A549 (cell line): ENCODE measurements at regions of chr20 and their contacts with region 1.

Region 1: DNA sequence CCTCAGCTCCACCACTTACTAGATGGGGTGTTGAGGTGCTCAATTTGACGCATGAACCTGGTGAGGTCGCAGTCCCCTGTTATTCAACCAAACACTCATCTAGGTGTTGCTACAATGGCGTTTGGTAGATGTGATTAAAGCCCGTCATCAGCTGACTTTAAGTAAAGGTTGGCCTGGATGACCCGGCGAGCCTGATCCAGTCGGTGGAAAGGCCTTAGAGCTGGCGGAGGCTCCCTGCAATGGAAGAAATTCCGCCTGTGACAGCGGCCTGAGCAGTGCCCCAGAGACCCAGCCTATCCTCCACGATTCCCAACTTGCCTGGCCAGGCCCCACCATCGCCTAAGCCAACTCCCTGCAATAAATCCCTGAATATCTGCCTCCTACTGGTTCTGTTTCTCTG is 171.4 kb downstream of the BMP7 start:
- DNase-seq: no peak
- ATAC-seq: no peak
- H3K4me3 ChIP-seq: no peak overlapping the region
- H3K27ac ChIP-seq: no peak overlapping the region
- H3K4me1 ChIP-seq: no peaks in the 10 kb centered on the region
- CTCF ChIP-seq: no peak
- EP300 ChIP-seq: no peak
- POLR2A ChIP-seq: no peak
- RAD21 ChIP-seq: no peak

Region 2: DNA sequence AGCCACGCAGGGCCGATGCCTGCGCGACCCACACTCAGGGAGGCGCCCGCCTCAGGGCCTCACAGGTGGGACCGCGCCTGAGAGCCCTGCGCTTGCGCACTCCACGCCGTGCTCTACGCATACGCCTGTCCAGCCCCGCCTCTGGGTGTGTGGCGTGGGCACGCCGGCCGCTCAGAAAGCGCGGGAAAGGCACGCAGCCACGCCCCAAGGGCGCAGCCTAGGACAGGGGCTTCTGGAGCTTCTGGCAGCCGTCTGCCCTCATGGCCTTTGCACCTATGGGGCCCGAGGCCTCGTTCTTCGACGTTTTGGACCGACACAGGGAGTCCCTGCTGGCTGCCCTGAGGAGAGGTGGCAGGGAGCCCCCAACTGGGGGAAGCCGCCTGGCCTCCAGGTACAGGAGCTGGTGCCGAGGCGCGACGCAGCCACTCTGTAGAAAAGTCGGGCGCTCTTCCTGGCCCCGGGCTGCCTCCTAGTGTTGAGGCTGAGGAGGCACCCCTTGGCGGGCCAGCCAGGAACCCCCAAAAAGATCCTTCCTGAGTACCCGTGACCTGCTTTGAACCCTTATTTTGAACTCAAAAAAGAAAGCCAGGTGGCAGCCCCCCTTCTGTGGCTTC is 234.7 kb after region 1 on chr20 and contains the start of gene SPO11:
- CTCF ChIA-PET with region 1: interaction called, 51 read pairs
- POLR2A ChIA-PET with region 1: no interaction called
- DNase-seq: no peak
- ATAC-seq: no peak
- H3K4me3 ChIP-seq: no peak within 1 kb of the TSS
- H3K27ac ChIP-seq: no peak within 1 kb of the TSS
- H3K4me1 ChIP-seq: no peaks in the 10 kb centered on the region
- CTCF ChIP-seq: no peak
- EP300 ChIP-seq: no peak
- POLR2A ChIP-seq: no peak
- RAD21 ChIP-seq: 0 out of 5 replicates have a peak, but pooled peaks of 1 of the 2 experiments have one; percentile 5
- polyA plus RNA-seq, gene SPO11: not detected in 2 replicates